ENCODE measurements at regions of chr16 and their contacts with region 1.

Region 1: GRCh38 chr16:68396481-68396880 is 51.8 kb downstream of the SMPD3 start:
- DNase-seq: peak; percentile 19 to 76 (median 50)
- ATAC-seq: peak; percentile 66 to 78 (median 74)
- H3K4me3 ChIP-seq: no peak overlapping the region
- H3K4me3 Mint-ChIP-seq: no peak overlapping the region
- H3K27ac ChIP-seq: no peak overlapping the region
- H3K27ac Mint-ChIP-seq: peak overlapping the region; percentile 31 to 44
- H3K4me1 ChIP-seq: peaks cover 0 to 28% of the 10 kb centered on the region in 2 experiments
- H3K4me1 Mint-ChIP-seq: peaks cover 22 to 29% (median 25%) of the 10 kb centered on the region in 3 donors
- H3K27me3 ChIP-seq: peaks cover 0 to 5% of the 10 kb centered on the region in 2 experiments
- H3K27me3 Mint-ChIP-seq: no peaks in the 10 kb centered on the region

Region 2: DNA sequence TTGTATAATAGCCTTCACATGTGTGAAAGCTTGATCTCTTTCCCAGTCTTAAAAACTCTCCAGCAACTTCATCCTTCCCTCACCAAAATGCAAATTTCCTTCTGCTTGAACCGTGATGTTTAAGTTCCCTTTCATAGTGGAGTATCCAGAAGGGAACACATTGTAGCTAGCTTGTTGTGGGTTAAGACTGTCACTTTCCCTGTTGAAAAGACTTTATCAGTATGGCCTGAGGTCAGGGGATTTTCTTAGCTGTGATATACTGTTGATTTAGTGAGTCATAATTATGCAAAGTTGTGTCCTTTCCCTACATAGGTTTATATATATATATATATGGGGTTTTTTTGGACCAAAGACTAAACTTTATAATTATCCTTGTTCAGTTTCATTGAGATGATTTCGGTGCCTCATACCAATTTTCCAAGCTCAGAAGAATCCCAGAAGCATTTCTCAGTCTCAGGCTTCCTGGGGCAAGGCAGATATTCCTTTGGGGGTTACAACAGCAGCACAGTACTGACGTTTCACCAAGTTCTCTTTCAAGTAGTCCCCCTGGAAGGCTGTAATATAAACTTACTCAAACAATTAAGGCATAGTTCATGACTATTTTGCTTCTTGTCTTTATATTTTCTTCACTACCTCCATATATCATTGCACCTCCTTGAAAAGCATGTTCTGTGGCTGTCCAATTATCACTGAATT is 196.2 kb before region 1 on chr16:
- CTCF ChIA-PET with region 1: no interaction called
- POLR2A ChIA-PET with region 1: no interaction called
- DNase-seq: no peak
- ATAC-seq: no peak
- H3K4me3 ChIP-seq: no peak overlapping the region
- H3K4me3 Mint-ChIP-seq: no peak overlapping the region
- H3K27ac ChIP-seq: no peak overlapping the region
- H3K27ac Mint-ChIP-seq: peak overlapping the region; percentile 69 to 74
- H3K4me1 ChIP-seq: peaks cover 0 to 2% of the 10 kb centered on the region in 2 experiments
- H3K4me1 Mint-ChIP-seq: peaks cover 7 to 30% (median 19%) of the 10 kb centered on the region in 3 donors
- H3K27me3 ChIP-seq: no peaks in the 10 kb centered on the region
- H3K27me3 Mint-ChIP-seq: no peaks in the 10 kb centered on the region

Region 3: DNA sequence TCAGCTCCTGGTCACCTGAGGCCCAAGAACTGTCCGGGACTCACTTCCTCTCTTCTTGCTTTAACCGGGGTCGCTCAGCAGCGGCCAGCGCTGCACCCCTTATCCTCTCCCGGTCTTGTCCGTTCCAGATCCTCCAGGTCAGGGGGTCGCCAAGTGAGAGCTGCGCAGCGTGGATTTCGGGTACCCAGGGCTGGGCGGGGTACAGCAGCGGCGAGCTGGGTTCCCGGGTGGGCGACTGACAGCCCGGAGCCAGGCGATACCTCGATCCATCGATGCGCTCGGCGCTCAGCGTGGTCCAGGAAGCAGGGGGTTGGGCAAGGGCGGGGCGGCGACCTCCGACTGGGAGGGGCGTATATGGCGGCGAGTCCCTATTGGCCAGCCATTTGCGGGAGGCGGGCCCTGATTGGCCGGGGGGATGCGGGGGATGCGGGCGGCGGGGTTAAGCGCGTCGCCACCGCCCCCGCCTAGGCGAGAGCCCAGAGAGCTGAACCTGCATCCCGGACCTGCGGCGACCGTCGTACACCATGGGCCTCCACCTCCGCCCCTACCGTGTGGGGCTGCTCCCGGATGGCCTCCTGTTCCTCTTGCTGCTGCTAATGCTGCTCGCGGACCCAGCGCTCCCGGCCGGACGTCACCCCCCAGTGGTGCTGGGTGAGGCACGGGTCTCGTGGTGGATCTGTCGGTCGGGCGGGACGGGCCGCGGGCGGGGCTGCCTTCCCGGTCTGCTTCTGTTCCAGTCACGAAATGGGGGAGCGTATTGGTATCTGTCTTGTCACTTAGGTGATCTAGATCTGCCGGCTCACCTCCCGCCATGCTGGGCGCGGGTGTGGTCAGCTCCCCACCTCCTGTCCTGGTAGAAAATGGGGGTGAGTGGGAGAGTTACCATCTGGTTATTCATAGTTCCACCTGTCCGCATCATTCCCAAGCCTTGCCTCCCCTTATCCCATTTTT is 151.3 kb before region 1 on chr16 and contains the start of gene PLA2G15:
- CTCF ChIA-PET with region 1: no interaction called
- POLR2A ChIA-PET with region 1: no interaction called
- DNase-seq: peak; percentile 84 to 98 (median 94)
- ATAC-seq: peak; percentile 97 to 99 (median 97)
- H3K4me3 ChIP-seq: peak within 1 kb of the TSS; percentile 74 to 77
- H3K4me3 Mint-ChIP-seq: peak within 1 kb of the TSS; percentile 94 to 98 (median 98)
- H3K27ac ChIP-seq: peak within 1 kb of the TSS; percentile 20
- H3K27ac Mint-ChIP-seq: peak within 1 kb of the TSS; percentile 79 to 90
- H3K4me1 ChIP-seq: peaks cover 6 to 34% of the 10 kb centered on the region in 2 experiments
- H3K4me1 Mint-ChIP-seq: peaks cover 22 to 35% (median 31%) of the 10 kb centered on the region in 3 donors
- H3K27me3 ChIP-seq: peaks cover 0 to 6% of the 10 kb centered on the region in 2 experiments
- H3K27me3 Mint-ChIP-seq: no peaks in the 10 kb centered on the region
- total RNA-seq, gene PLA2G15: 8.7 to 16.4 (median 10.9) TPM

Region 4: GRCh38 chr16:68460067-68460466 is 63.6 kb after region 1 on chr16:
- CTCF ChIA-PET with region 1: no interaction called
- POLR2A ChIA-PET with region 1: interaction called in 1 of 2 experiments, 10 read pairs
- DNase-seq: no peak
- ATAC-seq: no peak
- H3K4me3 ChIP-seq: no peak overlapping the region
- H3K4me3 Mint-ChIP-seq: no peak overlapping the region
- H3K27ac ChIP-seq: no peak overlapping the region
- H3K27ac Mint-ChIP-seq: no peak overlapping the region
- H3K4me1 ChIP-seq: no peaks in the 10 kb centered on the region
- H3K4me1 Mint-ChIP-seq: no peaks in the 10 kb centered on the region
- H3K27me3 ChIP-seq: peaks cover 0 to 10% of the 10 kb centered on the region in 2 experiments
- H3K27me3 Mint-ChIP-seq: peaks cover 0 to 17% of the 10 kb centered on the region in 2 donors

Region 5: GRCh38 chr16:68512183-68512582 is 115.7 kb after region 1 on chr16:
- CTCF ChIA-PET with region 1: interaction called, 16 to 29 read pairs
- POLR2A ChIA-PET with region 1: no interaction called
- DNase-seq: no peak
- ATAC-seq: no peak
- H3K4me3 ChIP-seq: no peak overlapping the region
- H3K4me3 Mint-ChIP-seq: no peak overlapping the region
- H3K27ac ChIP-seq: no peak overlapping the region
- H3K27ac Mint-ChIP-seq: no peak overlapping the region
- H3K4me1 ChIP-seq: peaks cover 0 to 9% of the 10 kb centered on the region in 2 experiments
- H3K4me1 Mint-ChIP-seq: no peaks in the 10 kb centered on the region
- H3K27me3 ChIP-seq: peaks cover 0 to 12% of the 10 kb centered on the region in 2 experiments
- H3K27me3 Mint-ChIP-seq: peaks cover 0 to 2% of the 10 kb centered on the region in 2 donors

Region 6: GRCh38 chr16:68520649-68521086 is 124.2 kb after region 1 on chr16:
- CTCF ChIA-PET with region 1: interaction called, 4 to 10 read pairs
- POLR2A ChIA-PET with region 1: no interaction called
- DNase-seq: peak; percentile 64 to 92 (median 85)
- ATAC-seq: peak; percentile 96 to 97 (median 96)
- H3K4me3 ChIP-seq: peak overlapping the region; percentile 27 to 28
- H3K4me3 Mint-ChIP-seq: peak overlapping the region in 2 of 3 donors; percentile 51 to 66
- H3K27ac ChIP-seq: no peak overlapping the region
- H3K27ac Mint-ChIP-seq: no peak overlapping the region
- H3K4me1 ChIP-seq: peaks cover 0 to 10% of the 10 kb centered on the region in 2 experiments
- H3K4me1 Mint-ChIP-seq: peaks cover 7 to 10% (median 9%) of the 10 kb centered on the region in 3 donors
- H3K27me3 ChIP-seq: peaks cover 0 to 9% of the 10 kb centered on the region in 2 experiments
- H3K27me3 Mint-ChIP-seq: no peaks in the 10 kb centered on the region